Transverse colon (tissue), 4 donors: ENCODE measurements at regions of chr19 and their contacts with region 1.

Region 1: DNA sequence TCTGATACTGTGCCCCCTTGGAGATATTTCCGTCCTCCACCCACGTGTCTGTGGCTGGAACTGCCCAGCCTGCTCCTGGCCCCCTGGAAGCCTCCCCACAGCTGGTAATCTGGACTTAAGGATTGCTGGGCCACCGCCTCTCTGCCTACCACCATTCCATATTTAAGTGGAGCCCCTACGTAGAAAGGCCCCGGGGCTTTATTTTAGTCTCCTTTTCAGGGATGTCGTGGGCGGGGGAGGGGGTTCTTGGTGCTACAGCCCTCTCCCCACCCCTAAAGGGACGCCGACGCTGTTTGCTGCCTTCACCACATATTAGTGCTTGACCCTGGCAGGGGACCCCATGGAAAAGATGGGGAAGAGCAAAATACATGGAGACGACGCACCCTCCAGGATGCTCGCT is 2.7 kb upstream of the NOP53 start:
- DNase-seq: no peak
- H3K4me3 ChIP-seq: peak overlapping the region in 2 of 4 donors; percentile 39 to 54
- H3K27ac ChIP-seq: peak overlapping the region; percentile 95 to 98 (median 96)
- H3K4me1 ChIP-seq: peaks cover 24 to 42% (median 34%) of the 10 kb centered on the region in 4 donors
- H3K27me3 ChIP-seq: no peaks in the 10 kb centered on the region
- CTCF ChIP-seq: no peak
- EP300 ChIP-seq: no peak
- POLR2A ChIP-seq: no peak

Region 2: DNA sequence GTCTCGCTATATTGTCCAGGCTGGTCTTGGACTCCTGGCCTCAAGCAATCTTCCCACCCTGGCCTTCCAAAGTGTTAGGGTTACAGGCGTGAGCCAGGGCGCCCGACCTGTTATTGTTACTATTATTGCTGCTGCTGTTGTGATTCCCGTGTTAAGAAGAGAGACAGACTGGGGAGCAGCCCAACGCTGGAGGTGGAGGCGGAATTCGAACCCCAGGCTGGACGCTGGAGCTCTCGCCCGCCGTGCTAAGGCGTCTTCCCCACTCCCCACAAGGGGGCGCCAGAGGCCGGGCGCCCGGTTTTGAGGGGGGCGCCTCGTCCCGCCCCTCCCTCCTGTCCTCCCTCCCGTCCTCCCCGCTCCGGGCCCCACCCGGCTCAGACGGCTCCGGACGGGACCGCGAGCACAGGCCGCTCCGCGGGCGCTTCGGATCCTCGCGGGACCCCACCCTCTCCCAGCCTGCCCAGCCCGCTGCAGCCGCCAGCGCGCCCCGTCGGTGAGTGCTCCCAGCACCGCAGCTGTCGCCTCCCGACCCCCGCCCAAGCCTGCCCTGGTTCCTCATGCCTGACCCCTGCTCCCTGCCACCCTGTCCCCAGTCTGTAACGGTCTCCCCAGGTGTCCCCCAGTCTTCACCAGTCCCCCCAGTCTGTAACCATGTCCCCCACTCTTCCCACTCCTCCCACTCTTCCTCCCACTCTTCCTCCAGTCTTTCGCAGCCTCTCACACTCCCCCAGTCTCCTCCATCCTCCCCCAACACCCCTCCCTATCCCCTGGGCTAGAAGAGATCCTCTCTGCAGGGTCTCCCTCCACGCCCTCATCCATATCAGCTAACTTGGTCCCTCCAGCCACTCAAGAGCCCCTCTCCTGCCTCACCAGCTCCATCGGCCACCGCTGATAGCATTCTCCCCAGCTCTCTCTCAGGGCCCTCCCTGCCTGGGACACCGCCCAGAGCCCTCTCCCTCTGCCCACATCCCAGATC is 29.3 kb before region 1 on chr19 and contains the start of gene EHD2:
- in situ Hi-C with region 1: no loop called
- intact Hi-C with region 1: loop called (anchors 2 kb)
- DNase-seq: peak; percentile 50
- H3K4me3 ChIP-seq: peak within 1 kb of the TSS; percentile 44 to 73 (median 56)
- H3K27ac ChIP-seq: peak within 1 kb of the TSS; percentile 88 to 95 (median 89)
- H3K4me1 ChIP-seq: peaks cover 16 to 39% (median 20%) of the 10 kb centered on the region in 4 donors
- H3K27me3 ChIP-seq: peaks cover 28% of the 10 kb centered on the region
- CTCF ChIP-seq: peak; percentile 80 to 96 (median 90)
- EP300 ChIP-seq: no peak
- POLR2A ChIP-seq: peak; percentile 59
- total RNA-seq, gene EHD2: 15.2 to 93.1 (median 25.3) TPM